GM10248 (cell line): ENCODE measurements at regions of chr2 and their contacts with region 1.

Region 1: DNA sequence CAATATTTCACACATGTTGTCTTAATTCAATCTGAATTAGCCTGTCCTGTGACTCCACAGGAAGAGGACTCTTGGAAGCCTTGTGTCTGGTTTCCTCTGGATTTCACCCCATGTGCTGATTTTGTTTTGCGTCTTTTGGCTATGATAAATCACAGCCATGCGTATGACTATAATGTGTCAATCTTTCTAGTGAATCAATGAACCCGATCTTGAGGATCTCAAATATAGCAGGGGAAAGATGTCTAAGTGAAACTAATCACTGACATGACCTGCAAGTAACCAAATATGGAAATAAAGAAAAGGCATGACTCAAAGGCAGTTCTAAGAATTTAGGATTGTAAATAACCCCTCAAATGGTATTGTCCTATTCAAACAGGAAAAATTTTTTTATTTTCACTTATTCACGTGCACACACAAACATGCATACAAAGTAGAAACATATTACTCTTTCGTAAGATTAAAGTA is 8.2 kb downstream of the WDFY1 start:
- DNase-seq: no peak
- CTCF ChIP-seq: no peak

Region 2: DNA sequence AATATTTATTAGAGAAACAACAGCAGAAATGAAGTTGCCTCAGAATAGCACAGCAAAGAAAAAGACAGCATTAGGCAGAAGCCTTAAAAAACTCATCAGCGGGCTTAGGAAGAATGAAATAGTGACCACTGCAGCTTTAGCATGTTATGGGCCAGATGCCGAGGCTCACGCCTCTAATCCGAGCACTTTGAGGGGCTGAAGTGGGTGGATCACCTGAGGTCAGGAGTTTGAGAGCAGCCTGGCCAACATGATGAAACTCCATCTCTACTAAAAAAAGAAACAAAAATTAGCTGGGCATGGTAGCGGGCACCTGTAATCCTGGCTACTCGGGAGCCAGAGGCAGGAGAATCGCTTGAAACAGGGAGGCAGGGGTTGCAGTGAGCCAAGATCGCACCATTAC is 131.9 kb before region 1 on chr2:
- CTCF ChIA-PET with region 1: no interaction called
- POLR2A ChIA-PET with region 1: no interaction called
- DNase-seq: no peak
- CTCF ChIP-seq: no peak

Region 3: GRCh38 chr2:223925106-223925505 is 11.8 kb before region 1 on chr2:
- CTCF ChIA-PET with region 1: interaction called, 14 read pairs
- POLR2A ChIA-PET with region 1: interaction called, 5 read pairs
- DNase-seq: no peak
- CTCF ChIP-seq: no peak

Region 4: DNA sequence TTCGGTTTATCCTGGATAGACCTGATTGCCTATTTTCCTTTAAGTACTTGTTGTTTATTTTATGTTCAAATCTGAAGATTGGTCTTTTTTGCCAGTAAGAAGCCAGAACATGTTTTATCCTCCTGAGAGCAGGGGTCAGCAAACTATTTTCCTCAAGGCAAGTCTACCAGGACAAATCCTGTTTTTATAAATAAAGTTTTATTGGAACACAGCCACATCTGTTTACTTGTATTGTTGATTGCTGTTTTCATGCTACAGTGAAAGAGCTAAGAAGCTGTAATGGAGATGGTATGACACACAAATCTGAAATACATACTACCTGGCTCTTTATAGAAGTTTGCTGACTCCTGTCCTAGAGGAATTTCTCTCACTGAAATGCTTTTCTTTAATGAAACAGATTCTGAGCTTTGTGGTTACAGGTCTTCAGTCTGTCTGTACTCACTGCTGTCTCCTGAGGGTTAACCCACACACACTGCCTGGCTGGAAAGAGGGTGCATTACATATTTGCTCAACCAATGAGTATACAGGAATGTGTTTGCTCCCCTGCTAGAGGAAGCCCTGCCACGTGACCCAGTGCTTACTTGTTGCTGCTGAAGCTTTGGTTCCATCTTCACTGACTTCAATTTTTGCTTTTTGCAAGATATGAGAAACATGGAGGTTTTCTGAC is 43.0 kb after region 1 on chr2:
- CTCF ChIA-PET with region 1: no interaction called
- POLR2A ChIA-PET with region 1: no interaction called
- DNase-seq: no peak
- CTCF ChIP-seq: no peak